ENCODE measurements at regions of chr10 and their contacts with region 1.

Region 1: DNA sequence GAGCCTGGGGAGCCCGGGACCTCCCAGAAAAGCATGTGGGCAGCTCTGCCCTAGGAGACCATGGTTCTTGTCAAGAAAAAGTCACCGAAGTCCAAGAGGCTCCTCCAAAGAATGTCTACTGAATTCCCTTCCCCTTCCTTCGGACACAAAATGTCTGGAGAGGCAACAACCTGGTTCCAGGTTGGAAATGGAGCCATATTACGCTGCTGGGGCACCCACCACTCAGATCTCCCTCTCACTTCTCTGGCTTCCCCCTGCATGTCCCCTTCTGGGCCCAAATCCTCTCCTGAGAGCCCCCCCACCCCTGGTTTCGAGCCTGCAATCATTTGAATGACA is 52.6 kb downstream of the RGS10 start:
- DNase-seq: no peak
- ATAC-seq: no peak
- H3K4me3 ChIP-seq: peak overlapping the region in 1 of 2 donors; percentile 58
- H3K4me3 Mint-ChIP-seq: peak overlapping the region; percentile 74 to 84 (median 78)
- H3K27ac ChIP-seq: peak overlapping the region; percentile 86
- H3K27ac Mint-ChIP-seq: peak overlapping the region; percentile 91 to 95
- H3K4me1 ChIP-seq: peaks cover 21 to 44% of the 10 kb centered on the region in 2 experiments
- H3K4me1 Mint-ChIP-seq: peaks cover 44 to 53% (median 45%) of the 10 kb centered on the region in 3 donors
- H3K27me3 ChIP-seq: no peaks in the 10 kb centered on the region
- H3K27me3 Mint-ChIP-seq: no peaks in the 10 kb centered on the region

Region 2: DNA sequence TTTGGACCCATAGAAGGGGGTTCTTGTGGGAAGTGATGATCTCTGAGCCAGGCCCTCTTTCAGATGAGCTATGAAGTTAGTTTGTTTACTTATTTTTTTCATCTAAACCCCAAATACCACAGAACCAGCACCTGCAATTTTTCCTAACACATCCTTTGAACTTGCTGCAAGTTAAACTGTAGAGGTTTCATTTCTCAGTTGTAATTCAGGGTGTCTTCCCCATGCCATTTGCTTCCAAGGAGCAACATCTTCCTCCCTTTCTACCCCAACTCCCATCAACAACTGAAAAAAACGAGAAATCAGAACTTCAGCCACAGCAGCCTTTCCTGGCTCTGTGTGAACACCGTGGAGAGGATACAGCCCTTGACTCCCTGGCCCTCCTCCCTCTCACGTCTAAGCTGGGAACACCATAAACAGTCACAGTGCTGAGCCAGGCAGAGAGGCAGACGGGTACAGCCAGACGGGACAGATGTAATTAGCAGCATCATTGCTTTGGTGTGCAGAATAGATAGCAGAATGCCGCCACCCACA is 11.1 kb before region 1 on chr10:
- CTCF ChIA-PET with region 1: interaction called in 1 of 2 experiments, 4 read pairs
- POLR2A ChIA-PET with region 1: interaction called in 1 of 2 experiments, 12 read pairs
- DNase-seq: peak in 1 of 35 experiments; percentile 37
- ATAC-seq: peak; percentile 43 to 68 (median 48)
- H3K4me3 ChIP-seq: no peak overlapping the region
- H3K4me3 Mint-ChIP-seq: peak overlapping the region; percentile 42 to 64 (median 45)
- H3K27ac ChIP-seq: peak overlapping the region; percentile 5
- H3K27ac Mint-ChIP-seq: peak overlapping the region; percentile 72 to 76
- H3K4me1 ChIP-seq: peaks cover 17 to 28% of the 10 kb centered on the region in 2 experiments
- H3K4me1 Mint-ChIP-seq: peaks cover 27 to 39% (median 29%) of the 10 kb centered on the region in 3 donors
- H3K27me3 ChIP-seq: no peaks in the 10 kb centered on the region
- H3K27me3 Mint-ChIP-seq: no peaks in the 10 kb centered on the region

Measured in T-cell (primary cell).